BJ (cell line): ENCODE measurements at regions of chr10 and their contacts with region 1.

Region 1: DNA sequence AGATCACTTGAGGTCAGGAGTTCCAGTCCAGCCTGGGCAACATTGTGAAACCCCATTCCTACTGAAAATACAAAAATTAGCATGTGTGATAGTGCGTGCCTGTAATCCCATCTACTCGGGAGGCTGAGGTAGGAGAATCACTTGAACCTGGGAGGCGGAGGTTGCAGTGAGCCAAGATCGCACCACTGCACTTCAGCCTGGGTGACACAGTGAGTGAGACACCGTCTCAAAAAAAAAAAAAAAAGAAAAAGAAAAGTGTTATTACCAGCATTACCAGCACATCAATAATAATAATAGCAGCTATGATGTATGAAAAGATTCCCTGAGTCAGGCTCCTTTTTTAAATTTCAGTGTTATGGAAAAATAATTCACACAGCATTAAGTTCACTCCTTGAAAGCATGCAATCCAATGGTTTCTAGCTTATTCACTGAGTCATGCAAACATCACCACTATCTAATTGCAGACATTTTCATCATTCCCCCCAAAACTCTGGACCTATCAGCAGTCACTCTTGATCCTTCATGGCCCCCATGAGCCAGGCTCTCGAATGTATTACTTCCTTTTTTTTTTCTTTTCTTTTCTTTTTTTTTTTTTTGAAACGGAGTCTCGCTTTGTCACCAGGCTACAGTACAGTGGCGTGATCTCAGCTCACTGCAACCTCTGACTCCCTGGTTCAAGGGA is 228.4 kb downstream of the FANK1 start:
- DNase-seq: no peak
- H3K4me3 ChIP-seq: no peak overlapping the region
- H3K27me3 ChIP-seq: no peaks in the 10 kb centered on the region
- CTCF ChIP-seq: no peak

Region 2: DNA sequence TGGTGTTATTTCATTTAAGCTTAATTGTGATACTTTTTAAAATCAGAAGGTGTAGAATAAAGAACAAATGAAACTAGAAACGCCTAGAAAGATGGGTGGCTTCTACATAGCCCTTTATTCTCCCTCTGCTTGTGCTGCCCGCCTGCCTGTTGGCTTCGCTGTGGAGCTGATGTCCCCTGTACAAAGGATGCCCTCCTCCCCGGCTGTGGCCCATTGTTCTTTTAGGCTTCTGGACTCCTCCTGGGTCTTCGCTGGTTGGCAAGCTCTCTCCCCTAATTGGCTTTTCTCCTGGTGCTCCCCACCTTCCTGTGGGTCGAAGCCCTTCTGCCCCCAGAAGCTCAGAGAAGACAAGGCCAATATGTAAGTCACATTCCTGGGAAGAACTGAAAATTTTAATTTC is 130.2 kb before region 1 on chr10:
- CTCF ChIA-PET with region 1: no interaction called
- POLR2A ChIA-PET with region 1: interaction called, 10 read pairs
- DNase-seq: no peak
- H3K4me3 ChIP-seq: no peak overlapping the region
- H3K27me3 ChIP-seq: peaks cover 3% of the 10 kb centered on the region
- CTCF ChIP-seq: no peak

Region 3: GRCh38 chr10:126242397-126243287 is 117.8 kb after region 1 on chr10:
- CTCF ChIA-PET with region 1: no interaction called
- POLR2A ChIA-PET with region 1: no interaction called
- DNase-seq: peak; percentile 55
- H3K4me3 ChIP-seq: no peak overlapping the region
- H3K27me3 ChIP-seq: no peaks in the 10 kb centered on the region
- CTCF ChIP-seq: no peak